Psoas muscle (tissue), 8 donors: ENCODE measurements at regions of chr18 and their contacts with region 1.

Region 1: GRCh38 chr18:74013955-74014354 is 133.7 kb downstream of the FBXO15 start:
- DNase-seq: no peak
- ATAC-seq: peak in 3 of 4 donors; percentile 37 to 69 (median 41)
- H3K4me3 ChIP-seq: no peak overlapping the region
- H3K27ac ChIP-seq: no peak overlapping the region
- H3K4me1 ChIP-seq: no peaks in the 10 kb centered on the region
- H3K27me3 ChIP-seq: no peaks in the 10 kb centered on the region
- CTCF ChIP-seq: no peak

Region 2: DNA sequence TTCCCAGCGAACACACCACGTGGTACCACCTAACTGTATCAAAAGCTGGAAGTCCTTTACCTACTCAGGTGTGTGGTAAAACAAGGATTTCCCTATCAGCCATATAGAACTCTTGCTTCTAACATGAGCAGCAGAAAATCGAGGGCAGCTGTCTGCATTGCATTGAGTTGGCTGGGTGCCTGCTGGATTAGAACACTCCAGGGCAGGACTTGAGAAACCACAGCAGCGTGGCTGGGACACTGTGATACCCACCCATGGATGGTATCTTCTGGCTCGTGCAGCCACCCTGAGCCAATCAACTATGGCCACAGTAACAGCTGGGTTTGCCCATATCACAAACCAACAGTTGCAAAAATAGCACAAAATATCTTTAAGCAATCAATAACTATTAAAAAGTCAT is 54.6 kb before region 1 on chr18:
- intact Hi-C with region 1: loop called in 1 of 2 experiments (anchors 10 kb)
- DNase-seq: no peak
- ATAC-seq: no peak
- H3K4me3 ChIP-seq: no peak overlapping the region
- H3K27ac ChIP-seq: no peak overlapping the region
- H3K4me1 ChIP-seq: no peaks in the 10 kb centered on the region
- H3K27me3 ChIP-seq: peaks cover 0 to 2% (median 0%) of the 10 kb centered on the region in 3 donors
- CTCF ChIP-seq: no peak